ENCODE measurements at regions of chr1 and their contacts with region 1.

Region 1: DNA sequence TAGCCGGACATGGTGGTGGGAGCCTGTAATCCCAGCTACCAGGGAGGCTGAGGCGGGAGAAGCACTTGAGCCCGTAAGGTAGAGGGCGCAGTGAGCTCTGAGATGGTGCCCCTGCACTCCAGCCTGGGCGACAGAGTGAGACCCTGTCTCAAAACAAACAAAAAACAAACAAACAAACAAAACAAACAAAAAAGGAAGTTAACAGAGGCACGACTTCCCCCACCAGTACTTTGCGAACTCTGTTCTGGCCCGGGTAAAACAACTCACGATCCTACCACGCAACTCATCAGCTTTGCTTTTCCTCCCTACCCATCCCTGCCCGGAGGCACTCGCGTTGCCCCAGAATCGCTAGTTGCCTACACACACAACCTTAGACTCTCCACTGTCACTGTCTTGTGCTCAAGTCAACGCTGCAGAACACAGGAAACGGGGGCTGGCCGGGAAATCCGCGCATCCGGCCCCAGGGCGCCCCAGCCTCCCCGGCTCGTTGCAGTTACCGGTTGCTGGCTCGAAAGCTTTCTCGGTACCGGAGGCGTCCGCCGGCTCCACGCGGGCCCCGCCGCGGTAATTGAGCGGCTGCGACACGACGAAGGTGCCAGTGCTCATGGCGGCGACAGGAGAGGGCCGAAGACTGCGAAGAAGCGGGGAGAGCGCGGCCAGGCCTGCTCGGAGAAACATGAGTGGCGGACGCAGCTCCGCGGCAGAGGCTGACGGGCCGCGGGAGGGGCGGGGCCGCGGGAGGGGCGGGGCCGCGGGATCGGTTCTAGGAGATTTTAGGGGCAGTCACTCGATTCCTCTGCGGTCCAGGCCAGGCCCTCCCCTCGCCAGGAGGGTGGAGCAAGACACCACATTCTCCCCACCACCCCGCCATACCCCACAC is at the start of gene ALDH9A1:
- DNase-seq: peak; percentile 87
- H3K4me3 ChIP-seq: peak within 1 kb of the TSS; percentile 68
- H3K27ac ChIP-seq: peak within 1 kb of the TSS; percentile 85
- H3K4me1 ChIP-seq: peaks cover 4% of the 10 kb centered on the region
- CTCF ChIP-seq: peak; percentile 69
- total RNA-seq, gene ALDH9A1: 22.5 and 36.0 TPM in 2 replicates

Region 2: DNA sequence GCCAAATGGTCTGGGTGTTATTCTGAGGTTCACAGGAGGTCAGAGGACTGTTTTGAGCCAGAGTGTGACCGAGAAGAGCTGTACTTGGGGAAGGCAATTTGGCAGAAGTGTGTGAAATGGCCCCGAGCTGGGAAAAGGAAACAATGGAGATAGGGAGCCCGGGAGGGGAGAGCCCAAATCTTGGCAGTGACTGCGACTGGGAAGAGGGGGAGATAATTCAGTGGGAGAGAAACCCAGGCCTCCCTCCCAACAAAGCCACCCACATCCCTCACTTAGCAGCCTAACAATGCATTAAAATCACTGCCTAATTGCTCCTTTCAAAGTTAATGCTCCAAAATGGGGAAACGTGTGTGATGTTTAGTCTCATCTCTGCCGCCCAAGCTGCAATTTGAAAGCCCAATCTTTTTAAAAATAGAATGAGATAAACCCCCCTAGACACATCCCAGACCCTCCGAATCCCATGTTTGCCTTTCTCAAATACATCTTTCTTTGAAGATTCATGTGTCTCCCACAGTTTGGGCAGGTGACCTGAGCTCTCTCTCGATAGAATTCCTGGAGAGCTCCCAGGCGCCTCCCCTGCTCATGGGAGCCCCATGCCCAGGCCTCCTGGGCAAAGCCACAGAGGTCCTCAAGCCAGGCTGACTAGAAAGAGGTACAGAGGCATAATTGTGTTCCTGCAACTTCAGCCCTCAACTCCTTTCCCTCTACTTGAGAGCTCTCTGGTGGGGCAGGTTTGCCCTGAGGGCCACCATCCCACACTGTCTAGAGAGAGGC is 137.1 kb before region 1 on chr1:
- CTCF ChIA-PET with region 1: no interaction called
- POLR2A ChIA-PET with region 1: no interaction called
- intact Hi-C with region 1: no loop called
- DNase-seq: no peak
- H3K4me3 ChIP-seq: no peak overlapping the region
- H3K27ac ChIP-seq: no peak overlapping the region
- H3K4me1 ChIP-seq: no peaks in the 10 kb centered on the region
- CTCF ChIP-seq: no peak

Region 3: GRCh38 chr1:165610885-165611284 is 87.2 kb before region 1 on chr1:
- CTCF ChIA-PET with region 1: no interaction called
- POLR2A ChIA-PET with region 1: interaction called, 13 read pairs
- intact Hi-C with region 1: no loop called
- DNase-seq: peak; percentile 11
- H3K4me3 ChIP-seq: no peak overlapping the region
- H3K27ac ChIP-seq: no peak overlapping the region
- H3K4me1 ChIP-seq: peaks cover 28% of the 10 kb centered on the region
- CTCF ChIP-seq: no peak

Region 4: DNA sequence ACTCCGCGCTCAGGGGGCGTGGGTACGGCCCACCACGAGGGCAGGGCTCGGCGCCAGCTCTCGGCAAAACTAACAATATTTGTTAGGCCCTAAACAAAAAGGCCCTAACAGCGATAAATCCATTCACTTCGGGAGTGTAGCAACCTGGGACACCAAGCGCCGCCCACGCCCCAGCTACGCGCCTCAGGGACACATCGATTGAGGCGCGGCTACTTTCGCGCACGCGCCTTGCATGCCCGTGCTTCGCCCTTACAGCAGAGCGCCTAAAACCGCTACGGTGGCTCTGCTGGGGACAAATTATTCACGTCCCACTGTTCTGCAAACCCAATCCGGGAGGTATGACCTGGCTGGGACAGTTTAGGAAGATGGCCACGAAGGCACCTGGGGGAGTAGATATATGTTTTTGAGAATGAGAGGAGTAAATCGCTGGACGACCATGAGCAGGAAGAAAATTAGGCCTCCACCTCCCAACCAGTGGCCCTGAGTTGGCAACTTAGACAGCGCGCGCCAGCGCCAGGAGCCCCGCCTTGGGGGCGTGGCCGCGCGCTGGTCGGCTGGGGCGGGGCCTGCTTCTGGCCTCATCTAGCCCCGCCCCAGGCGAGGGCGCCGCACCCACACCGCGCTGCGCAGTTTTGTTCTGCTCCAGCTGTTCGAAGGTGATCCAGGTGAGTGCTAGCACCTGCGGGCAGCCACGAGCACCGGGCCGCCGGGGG is 67.3 kb before region 1 on chr1 and contains the start of gene MGST3:
- CTCF ChIA-PET with region 1: no interaction called
- POLR2A ChIA-PET with region 1: interaction called, 3 read pairs
- intact Hi-C with region 1: loop called (anchors 1 kb)
- DNase-seq: peak; percentile 97
- H3K4me3 ChIP-seq: peak within 1 kb of the TSS; percentile 88
- H3K27ac ChIP-seq: peak within 1 kb of the TSS; percentile 77
- H3K4me1 ChIP-seq: peaks cover 53% of the 10 kb centered on the region
- CTCF ChIP-seq: no peak
- total RNA-seq, gene MGST3: 95.7 and 127 TPM in 2 replicates

Measured in OCI-LY7 (cell line).